BJ (cell line): ENCODE measurements at regions of chr11 and their contacts with region 1.

Region 1: DNA sequence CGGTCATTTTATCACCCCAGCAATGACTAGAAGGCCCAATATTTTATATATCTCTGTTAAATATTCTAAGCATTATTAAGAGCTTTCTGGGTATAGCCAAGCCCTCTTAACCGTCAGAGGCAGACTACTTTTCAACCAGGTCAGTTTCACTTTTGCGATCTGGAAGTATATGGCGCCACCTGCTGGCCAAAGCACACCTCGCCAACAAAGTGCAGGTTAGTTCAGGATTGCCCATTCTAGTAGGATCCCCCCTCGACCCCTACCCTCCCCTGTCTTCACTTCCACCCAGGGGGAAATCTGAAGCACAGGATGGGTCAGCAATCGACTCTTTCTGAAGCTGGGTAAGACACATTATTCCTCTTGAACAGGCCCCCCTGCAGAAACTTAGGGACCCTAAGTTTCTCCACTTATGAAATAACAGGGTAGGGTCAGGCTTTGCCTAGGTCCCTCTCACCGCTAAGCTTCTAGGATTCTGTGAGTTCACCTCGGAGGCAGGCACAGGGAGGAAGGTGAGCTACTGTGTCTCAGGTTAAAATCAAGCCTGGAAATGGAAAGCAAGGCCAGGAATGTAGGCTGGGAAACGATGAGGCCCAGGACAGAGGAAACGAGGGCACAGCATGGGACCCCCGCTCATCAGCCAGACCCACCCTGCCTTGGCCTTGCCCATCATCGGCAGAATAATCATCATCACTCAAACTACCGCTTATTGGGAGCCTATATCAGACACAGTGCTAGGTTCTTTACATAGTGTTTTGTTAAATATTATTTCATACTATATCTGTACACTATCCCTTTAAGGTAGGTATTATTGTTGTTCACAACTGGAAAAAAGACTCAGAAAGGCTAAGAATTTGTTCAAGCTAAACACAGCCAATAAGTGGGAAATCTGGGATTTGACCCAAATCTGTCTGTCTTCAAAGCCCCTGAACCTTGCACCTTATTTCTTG is 35.6 kb downstream of the KCNJ1 start:
- DNase-seq: no peak
- H3K4me3 ChIP-seq: no peak overlapping the region
- H3K27me3 ChIP-seq: no peaks in the 10 kb centered on the region; the same call in 1 of the 2 replicates
- CTCF ChIP-seq: peak; percentile 84

Region 2: DNA sequence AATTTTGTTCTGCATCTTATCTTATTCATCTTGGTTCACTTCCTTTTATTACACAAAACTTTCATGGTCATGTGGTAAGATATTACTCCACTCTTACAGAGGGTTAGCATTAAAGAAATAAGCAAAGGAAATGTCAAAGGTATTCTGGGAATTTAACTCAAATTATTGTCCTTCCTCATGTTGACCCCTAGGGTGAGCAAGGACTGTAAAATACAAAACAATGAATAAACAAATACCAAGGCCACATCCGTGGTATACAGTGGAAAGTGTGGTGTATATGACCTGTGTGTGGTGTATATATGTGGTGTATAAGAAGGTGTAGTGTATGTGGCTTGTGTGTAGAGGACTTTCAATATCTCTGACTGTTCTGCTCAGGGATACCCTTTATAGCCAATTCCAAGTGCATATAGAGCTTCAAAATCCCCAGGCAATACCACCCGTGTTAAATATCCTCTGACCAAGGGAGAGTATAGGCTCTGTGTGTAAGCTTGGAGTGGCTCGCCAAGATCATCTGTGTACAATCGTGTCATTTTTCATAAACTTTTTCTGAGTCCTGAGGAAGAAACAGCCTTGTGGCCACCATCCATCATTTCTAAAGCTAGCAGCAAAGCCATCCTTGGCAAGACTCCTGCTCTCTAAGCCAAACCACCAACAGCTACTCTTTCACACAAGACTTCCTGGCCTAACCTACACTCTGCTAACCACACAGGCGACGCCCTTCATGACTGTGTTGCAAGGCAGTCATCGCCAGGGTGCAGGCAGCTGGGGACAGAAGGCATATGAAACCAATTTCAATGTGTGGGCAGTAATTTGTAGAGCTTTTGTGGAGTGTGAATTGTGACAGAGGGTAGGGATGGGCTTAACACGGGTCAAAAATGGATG is 792.1 kb before region 1 on chr11:
- CTCF ChIA-PET with region 1: interaction called, 10 read pairs
- POLR2A ChIA-PET with region 1: no interaction called
- DNase-seq: peak; percentile 84
- H3K4me3 ChIP-seq: no peak overlapping the region
- H3K27me3 ChIP-seq: no peaks in the 10 kb centered on the region
- CTCF ChIP-seq: 0 out of 2 replicates have a peak, but pooled peaks have one; percentile 21

Region 3: GRCh38 chr11:128716661-128717210 is 114.7 kb before region 1 on chr11:
- CTCF ChIA-PET with region 1: interaction called, 10 read pairs
- POLR2A ChIA-PET with region 1: no interaction called
- DNase-seq: no peak
- H3K4me3 ChIP-seq: no peak overlapping the region
- H3K27me3 ChIP-seq: no peaks in the 10 kb centered on the region
- CTCF ChIP-seq: no peak

Region 4: DNA sequence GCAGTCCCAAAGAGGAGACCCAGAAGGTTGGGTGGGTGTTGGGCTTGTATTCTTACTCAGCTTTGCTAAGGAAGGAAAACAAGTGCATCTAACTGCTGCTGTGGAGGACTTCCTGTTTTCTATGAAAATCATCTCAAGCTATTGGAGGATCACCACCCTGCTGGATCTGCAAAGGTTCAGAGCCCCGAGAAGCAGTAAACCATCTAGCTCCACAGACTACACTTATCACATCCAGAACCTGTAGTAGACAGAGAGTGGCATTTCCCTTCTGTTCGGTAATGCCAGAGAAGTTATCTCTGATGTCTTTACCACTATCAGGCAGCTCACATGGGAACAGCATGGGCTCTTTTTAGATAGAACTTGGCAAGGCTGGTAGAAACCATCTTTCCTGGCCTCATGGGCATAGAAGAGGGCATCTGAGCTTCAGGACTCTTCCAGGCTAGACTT is 13.9 kb after region 1 on chr11:
- CTCF ChIA-PET with region 1: interaction called, 10 read pairs
- POLR2A ChIA-PET with region 1: no interaction called
- DNase-seq: no peak
- H3K4me3 ChIP-seq: no peak overlapping the region
- H3K27me3 ChIP-seq: peaks cover 19% of the 10 kb centered on the region
- CTCF ChIP-seq: no peak

Region 5: GRCh38 chr11:129209891-129210830 is 378.7 kb after region 1 on chr11:
- CTCF ChIA-PET with region 1: no interaction called
- POLR2A ChIA-PET with region 1: no interaction called
- DNase-seq: no peak
- H3K4me3 ChIP-seq: no peak overlapping the region
- H3K27me3 ChIP-seq: no peaks in the 10 kb centered on the region
- CTCF ChIP-seq: no peak